OCI-LY7 (cell line): ENCODE measurements at regions of chr10 and their contacts with region 1.

Region 1: GRCh38 chr10:71860243-71861029 is 9.4 kb upstream of the PSAP start:
- DNase-seq: peak; percentile 65
- H3K4me3 ChIP-seq: peak overlapping the region; percentile 54
- H3K27ac ChIP-seq: peak overlapping the region; percentile 83
- H3K4me1 ChIP-seq: peaks cover 57% of the 10 kb centered on the region
- CTCF ChIP-seq: no peak

Region 2: DNA sequence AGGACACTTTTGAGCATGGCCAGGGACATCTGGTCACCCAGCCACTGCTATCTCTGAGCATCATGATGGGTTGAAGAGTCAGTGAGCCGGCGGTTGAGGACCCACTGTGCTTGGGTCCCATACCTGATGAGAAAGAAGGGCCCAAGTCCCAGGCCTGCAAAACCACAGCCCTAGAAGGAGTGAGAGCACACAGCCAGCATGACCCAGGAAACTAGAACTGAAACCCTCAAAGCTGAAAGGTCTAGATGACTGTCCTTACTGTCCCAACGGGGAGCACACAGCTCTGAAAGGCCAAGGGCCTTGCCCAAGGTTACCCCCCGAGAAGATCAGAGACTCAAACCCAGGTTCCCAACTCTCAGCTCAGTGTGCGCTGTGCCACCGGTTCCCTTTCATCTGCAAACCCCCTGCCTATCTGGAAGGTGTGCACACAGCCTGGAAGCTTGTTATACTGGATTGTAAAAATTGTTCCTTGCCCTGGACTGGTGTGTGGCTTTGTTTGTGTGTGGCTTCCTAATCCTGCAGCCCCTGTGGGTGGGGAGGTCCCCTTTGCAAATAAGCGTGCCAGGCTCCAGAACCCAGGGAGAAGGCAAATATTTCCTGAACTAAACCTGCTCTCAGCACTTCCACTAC is 13.3 kb after region 1 on chr10:
- CTCF ChIA-PET with region 1: interaction called, 3 read pairs
- POLR2A ChIA-PET with region 1: interaction called, 21 read pairs
- intact Hi-C with region 1: no loop called
- DNase-seq: peak; percentile 46
- H3K4me3 ChIP-seq: no peak overlapping the region
- H3K27ac ChIP-seq: no peak overlapping the region
- H3K4me1 ChIP-seq: peaks cover 32% of the 10 kb centered on the region
- CTCF ChIP-seq: no peak

Region 3: DNA sequence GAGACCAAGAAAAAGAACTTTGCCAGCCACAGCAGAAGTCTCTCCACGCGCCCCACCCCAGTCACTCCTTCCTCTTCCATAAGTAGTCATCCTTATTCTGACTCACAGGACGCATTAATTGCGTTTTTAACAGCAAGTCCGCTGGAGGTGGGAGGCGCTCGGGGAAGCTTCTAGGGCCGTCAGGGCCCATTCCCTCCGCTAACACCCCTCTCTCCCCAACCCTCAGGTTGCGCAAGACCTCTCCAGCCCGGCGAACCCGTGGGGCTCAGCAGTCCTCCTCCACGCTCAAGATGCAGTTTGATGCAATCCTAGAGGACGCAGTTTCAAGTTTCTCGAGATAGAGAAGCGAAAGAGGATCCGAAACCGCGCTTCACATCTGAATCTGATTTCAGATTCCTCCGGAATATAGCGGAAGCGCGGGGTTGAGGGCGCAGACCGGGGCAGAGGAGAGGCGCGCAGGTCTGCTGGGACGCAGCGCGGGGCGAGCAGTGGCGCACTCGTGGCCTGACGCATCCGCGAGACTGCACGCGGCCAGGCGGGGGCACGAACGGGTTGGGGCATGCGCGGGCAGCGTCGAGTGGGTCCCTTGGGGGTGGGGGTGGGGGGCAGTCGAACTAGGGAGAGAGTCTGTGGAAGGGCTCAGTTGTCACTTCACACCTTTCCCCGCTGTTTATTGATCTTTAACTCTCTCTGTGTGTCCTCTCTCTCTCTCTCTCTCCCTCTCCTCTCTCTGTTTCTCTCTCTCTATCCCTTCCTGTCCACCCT is 28.4 kb after region 1 on chr10:
- CTCF ChIA-PET with region 1: no interaction called
- POLR2A ChIA-PET with region 1: interaction called, 4 read pairs
- intact Hi-C with region 1: loop called (anchors 2 kb)
- DNase-seq: peak; percentile 97
- H3K4me3 ChIP-seq: peak overlapping the region; percentile 57
- H3K27ac ChIP-seq: peak overlapping the region; percentile 50
- H3K4me1 ChIP-seq: peaks cover 38% of the 10 kb centered on the region
- CTCF ChIP-seq: peak; percentile 51